H1 (cell line): ENCODE measurements at regions of chr19 and their contacts with region 1.

Region 1: DNA sequence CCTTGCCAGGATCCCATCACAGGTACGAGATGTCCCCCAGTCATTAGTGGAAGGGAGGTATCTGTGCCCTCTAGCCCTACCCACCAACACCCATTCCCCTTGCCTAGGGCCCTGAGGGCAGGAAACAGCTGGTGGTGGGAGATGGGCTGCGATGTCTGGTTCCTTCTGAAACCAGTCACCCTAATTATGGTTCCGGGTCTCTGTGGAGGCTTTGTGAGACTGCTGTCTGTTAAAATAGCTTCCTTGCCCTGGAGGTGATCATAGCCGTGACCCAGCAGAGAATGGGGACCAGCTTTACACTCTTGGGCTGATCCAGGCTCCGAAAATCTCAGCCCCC is 5.5 kb downstream of the ALDH16A1 start:
- DNase-seq: no peak
- H3K4me3 ChIP-seq: no peak overlapping the region
- H3K27ac ChIP-seq: no peak overlapping the region
- H3K4me1 ChIP-seq: no peaks in the 10 kb centered on the region; a peak in 1 of 7 replicates
- H3K27me3 ChIP-seq: no peaks in the 10 kb centered on the region
- CTCF ChIP-seq: no peak
- EP300 ChIP-seq: no peak
- POLR2A ChIP-seq: no peak; a peak in 1 of 3 replicates
- RAD21 ChIP-seq: no peak

Region 2: DNA sequence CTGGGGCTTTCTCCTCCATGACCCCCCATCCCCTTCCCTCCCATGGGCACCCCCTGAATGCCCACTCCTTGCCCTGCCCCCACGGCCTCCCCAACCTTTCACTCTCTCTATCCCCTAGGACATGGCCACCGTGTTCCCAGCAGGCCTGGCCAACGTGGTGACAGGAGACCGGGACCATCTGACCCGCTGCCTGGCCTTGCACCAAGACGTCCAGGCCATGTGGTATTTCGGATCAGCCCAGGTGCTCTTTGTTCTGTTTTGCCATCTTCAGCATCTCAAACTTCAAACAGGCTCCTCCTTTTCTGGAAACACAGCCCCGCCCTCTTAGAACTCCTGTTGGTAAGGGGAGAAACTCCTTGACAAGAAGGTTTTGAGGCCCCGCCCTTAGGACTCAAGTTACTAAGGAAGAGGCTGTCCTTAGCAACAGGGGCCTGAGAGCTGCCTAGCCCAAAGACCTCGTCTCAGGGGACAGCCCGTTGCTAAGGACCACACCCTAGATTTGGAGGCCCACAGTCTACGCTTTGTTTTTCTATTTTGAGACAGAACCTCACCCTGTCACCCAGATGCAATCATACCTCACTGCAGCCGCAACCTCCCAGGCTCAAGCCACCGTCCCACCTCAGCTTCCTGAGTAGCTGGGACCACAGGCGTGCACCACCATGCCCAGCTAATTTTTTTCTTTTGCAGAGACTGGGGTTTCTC is 10.4 kb after region 1 on chr19:
- CTCF ChIA-PET with region 1: interaction called, 28 read pairs
- POLR2A ChIA-PET with region 1: interaction called, 29 read pairs
- DNase-seq: peak in 1 of 2 experiments; percentile 79
- H3K4me3 ChIP-seq: no peak overlapping the region
- H3K27ac ChIP-seq: peak overlapping the region; percentile 36; the same call in 1 of the 2 replicates
- H3K4me1 ChIP-seq: peaks cover 0 to 8% (median 3%) of the 10 kb centered on the region in 4 experiments; a peak in 6 of 7 replicates
- H3K27me3 ChIP-seq: no peaks in the 10 kb centered on the region
- CTCF ChIP-seq: no peak
- EP300 ChIP-seq: no peak
- POLR2A ChIP-seq: no peak
- RAD21 ChIP-seq: no peak

Region 3: DNA sequence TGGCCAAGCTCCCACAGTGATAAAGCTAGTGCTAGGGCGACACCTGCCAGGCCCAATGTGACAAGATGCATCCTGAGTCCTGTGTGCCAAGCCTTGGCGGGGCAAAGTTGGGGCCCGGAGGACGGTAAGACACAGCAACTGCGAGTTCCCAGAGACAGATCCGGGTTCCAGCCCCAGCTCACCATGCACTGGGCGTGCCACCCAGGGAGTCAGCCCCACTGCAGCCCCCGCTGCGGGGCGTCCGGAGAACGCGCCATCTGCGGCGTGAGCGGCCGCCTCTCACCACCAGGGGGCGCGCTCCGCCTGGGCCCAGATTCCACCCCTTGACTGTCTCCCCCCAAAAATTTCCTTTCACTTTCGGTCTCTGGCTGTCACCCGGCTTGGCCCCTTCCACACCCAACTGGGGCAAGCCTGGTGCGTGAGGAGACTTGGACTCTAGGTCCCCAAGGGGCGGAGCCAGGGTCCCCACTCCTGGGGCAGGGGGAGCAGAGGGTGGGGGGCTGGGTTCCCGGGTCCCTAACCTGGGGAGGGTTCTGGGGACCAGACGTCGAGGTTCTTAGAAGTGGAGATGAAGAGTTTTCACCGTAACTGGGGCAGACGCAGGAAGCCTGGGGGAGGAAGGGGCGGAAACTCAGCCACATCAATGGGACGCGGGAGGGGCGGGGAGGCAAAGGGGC is 15.5 kb after region 1 on chr19 and contains the start of gene FLT3LG:
- CTCF ChIA-PET with region 1: interaction called, 28 read pairs
- POLR2A ChIA-PET with region 1: interaction called, 33 read pairs
- DNase-seq: peak in 1 of 2 experiments; percentile 90
- H3K4me3 ChIP-seq: peak within 1 kb of the TSS in 2 of 4 experiments; percentile 10 to 58; a peak in 3 of 8 replicates
- H3K27ac ChIP-seq: no peak within 1 kb of the TSS
- H3K4me1 ChIP-seq: peaks cover 0 to 5% (median under 1%) of the 10 kb centered on the region in 4 experiments; a peak in 3 of 7 replicates
- H3K27me3 ChIP-seq: peaks cover 0 to 5% (median 0%) of the 10 kb centered on the region in 4 experiments; a peak in 4 of 7 replicates
- CTCF ChIP-seq: peak; percentile 86 to 92 (median 88)
- EP300 ChIP-seq: no peak
- POLR2A ChIP-seq: no peak
- RAD21 ChIP-seq: peak; percentile 36 to 49; a peak in 3 of 4 replicates
- total RNA-seq, gene FLT3LG: 1.6 and 2.6 TPM in 2 replicates